Right ventricle myocardium superior (tissue), 1 donor: ENCODE measurements at regions of chr5 and their contacts with region 1.

Region 1: GRCh38 chr5:54738118-54738972 is 220.8 kb downstream of the SNX18 start:
- DNase-seq: peak; percentile 91
- ATAC-seq: peak; percentile 76

Region 2: GRCh38 chr5:54580997-54581811 is 157.1 kb before region 1 on chr5:
- intact Hi-C with region 1: no loop called
- DNase-seq: no peak
- ATAC-seq: peak; percentile 47

Region 3: GRCh38 chr5:54785729-54786591 is 47.6 kb after region 1 on chr5:
- intact Hi-C with region 1: no loop called
- DNase-seq: peak; percentile 66
- ATAC-seq: peak; percentile 93

Region 4: DNA sequence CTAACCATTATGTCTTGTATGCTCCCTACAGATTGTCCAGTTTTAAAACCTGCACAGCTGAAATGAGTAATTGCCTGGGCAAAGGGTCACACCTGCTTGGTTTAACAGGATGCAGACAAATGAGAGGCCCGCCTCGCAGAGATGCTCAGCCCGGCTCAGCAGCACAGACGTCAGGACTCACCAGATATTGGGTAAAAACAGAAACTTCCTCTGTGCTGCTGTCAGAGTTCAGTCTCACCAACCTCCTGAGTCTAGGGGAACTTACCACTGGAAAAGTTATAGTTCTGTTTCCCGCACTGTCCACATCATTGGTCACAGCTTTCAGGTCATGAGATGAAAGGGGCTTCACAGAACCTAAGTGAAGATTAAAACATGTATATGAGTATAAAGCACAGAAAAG is 94.5 kb after region 1 on chr5:
- intact Hi-C with region 1: loop called (anchors 10 kb)
- DNase-seq: no peak
- ATAC-seq: no peak